ENCODE measurements at regions of chr1 and their contacts with region 1.

Region 1: GRCh38 chr1:169928438-169929209 is 34.9 kb upstream of the SCYL3 start:
- DNase-seq: peak; percentile 72
- ATAC-seq: peak; percentile 80; the same call in 1 of the 2 replicates
- H3K4me3 ChIP-seq: no peak overlapping the region
- H3K27ac ChIP-seq: no peak overlapping the region
- H3K4me1 ChIP-seq: no peaks in the 10 kb centered on the region; the same call in 1 of the 2 replicates
- H3K27me3 ChIP-seq: no peaks in the 10 kb centered on the region
- CTCF ChIP-seq: peak; percentile 87
- POLR2A ChIP-seq: peak; percentile 38; the same call in 1 of the 2 replicates
- RAD21 ChIP-seq: peak; percentile 90

Region 2: GRCh38 chr1:170074250-170075157 is 145.9 kb after region 1 on chr1 and contains the start of gene KIFAP3:
- CTCF ChIA-PET with region 1: no interaction called
- POLR2A ChIA-PET with region 1: no interaction called
- dilution Hi-C with region 1: no loop called
- in situ Hi-C with region 1: no loop called
- intact Hi-C with region 1: loop called (anchors 1 kb)
- DNase-seq: peak; percentile 96
- ATAC-seq: peak; percentile 100
- H3K4me3 ChIP-seq: peak within 1 kb of the TSS; percentile 76
- H3K27ac ChIP-seq: peak within 1 kb of the TSS; percentile 39
- H3K4me1 ChIP-seq: no peaks in the 10 kb centered on the region
- H3K27me3 ChIP-seq: no peaks in the 10 kb centered on the region
- CTCF ChIP-seq: peak; percentile 52
- POLR2A ChIP-seq: peak; percentile 39; the same call in 1 of the 2 replicates
- RAD21 ChIP-seq: peak; percentile 43
- total RNA-seq, gene KIFAP3: 10.9 and 22.2 TPM in 2 replicates

Region 3: GRCh38 chr1:170765712-170766330 is 837.2 kb after region 1 on chr1:
- CTCF ChIA-PET with region 1: no interaction called
- POLR2A ChIA-PET with region 1: no interaction called
- dilution Hi-C with region 1: no loop called
- in situ Hi-C with region 1: loop called (anchors 25 kb)
- intact Hi-C with region 1: loop called (anchors 2 kb)
- DNase-seq: peak; percentile 64
- ATAC-seq: peak; percentile 87
- H3K4me3 ChIP-seq: no peak overlapping the region
- H3K27ac ChIP-seq: no peak overlapping the region
- H3K4me1 ChIP-seq: no peaks in the 10 kb centered on the region
- H3K27me3 ChIP-seq: no peaks in the 10 kb centered on the region
- CTCF ChIP-seq: peak; percentile 75
- POLR2A ChIP-seq: no peak
- RAD21 ChIP-seq: peak; percentile 84

Region 4: DNA sequence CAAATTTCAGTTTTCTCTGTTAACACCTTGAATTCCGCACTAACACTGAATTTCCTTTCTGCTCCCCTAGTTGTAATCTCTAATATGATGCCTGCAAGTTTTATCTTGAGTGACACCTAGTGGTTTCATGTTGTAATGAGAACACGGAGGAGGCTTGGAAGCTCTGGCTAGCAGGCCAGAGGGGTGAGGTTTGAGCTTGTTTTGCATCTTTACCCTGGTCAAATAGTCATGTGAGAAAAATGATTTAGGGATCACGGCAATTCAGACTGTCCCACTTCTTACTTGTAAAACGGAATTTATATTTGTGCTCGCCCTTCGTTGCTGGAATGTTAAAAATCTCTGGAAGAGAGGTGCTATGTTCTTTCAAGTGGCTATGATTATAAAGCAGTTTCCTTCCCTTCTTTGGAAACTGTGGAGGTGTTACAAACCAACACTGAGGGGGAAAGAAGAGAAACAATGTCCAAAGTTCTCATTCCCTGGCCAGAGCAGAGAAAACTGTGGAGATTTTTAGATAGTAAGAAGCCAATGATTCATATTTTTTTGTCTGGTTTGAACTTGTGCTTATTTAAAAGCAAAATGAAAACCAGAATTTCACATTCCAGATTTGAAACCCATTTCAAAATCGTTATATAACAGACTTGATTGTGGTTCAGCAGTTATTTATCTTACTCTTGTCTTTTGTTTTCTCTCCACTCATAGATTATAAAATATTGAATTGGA is 1001.4 kb after region 1 on chr1:
- CTCF ChIA-PET with region 1: interaction called, 3 read pairs
- POLR2A ChIA-PET with region 1: no interaction called
- dilution Hi-C with region 1: no loop called
- in situ Hi-C with region 1: no loop called
- intact Hi-C with region 1: loop called (anchors 1 kb)
- DNase-seq: peak; percentile 66
- ATAC-seq: peak; percentile 98
- H3K4me3 ChIP-seq: no peak overlapping the region
- H3K27ac ChIP-seq: no peak overlapping the region
- H3K4me1 ChIP-seq: no peaks in the 10 kb centered on the region
- H3K27me3 ChIP-seq: no peaks in the 10 kb centered on the region; the same call in 1 of the 2 replicates
- CTCF ChIP-seq: peak; percentile 76
- POLR2A ChIP-seq: no peak
- RAD21 ChIP-seq: peak; percentile 79